Activated CD8-positive, alpha-beta T cell treated with anti-CD3 and anti-CD28 coated beads for 36 hours (primary cell): ENCODE measurements at regions of chr10 and their contacts with region 1.

Region 1: DNA sequence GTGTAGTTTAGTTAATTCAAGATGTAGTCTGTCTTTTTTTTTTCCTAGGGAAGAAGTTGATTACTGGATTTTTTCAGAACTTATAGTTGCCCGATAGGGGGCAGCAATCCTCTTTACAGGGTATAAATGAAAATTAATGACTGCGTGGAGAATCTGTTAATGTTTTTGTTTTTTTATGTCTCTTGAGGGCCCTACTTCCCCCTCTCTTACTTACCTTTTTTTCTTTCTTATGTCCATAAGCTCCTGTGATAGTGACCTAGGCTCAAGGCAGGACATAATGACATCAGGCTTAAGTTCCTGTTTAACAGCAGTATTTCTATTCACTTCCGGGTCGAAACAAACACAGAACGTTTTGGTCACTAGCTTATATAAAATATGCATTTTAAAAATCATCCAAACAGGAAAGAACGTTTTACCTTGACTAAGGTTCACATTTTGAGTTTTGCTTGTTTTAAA is 18.8 kb downstream of the CDC123 start:
- DNase-seq: peak; percentile 45
- ATAC-seq: peak; percentile 37
- H3K4me3 Mint-ChIP-seq: peak overlapping the region; percentile 20
- H3K27ac Mint-ChIP-seq: peak overlapping the region; percentile 80
- H3K4me1 Mint-ChIP-seq: peaks cover 12% of the 10 kb centered on the region
- H3K27me3 Mint-ChIP-seq: no peaks in the 10 kb centered on the region
- CTCF ChIP-seq: peak; percentile 85

Region 2: DNA sequence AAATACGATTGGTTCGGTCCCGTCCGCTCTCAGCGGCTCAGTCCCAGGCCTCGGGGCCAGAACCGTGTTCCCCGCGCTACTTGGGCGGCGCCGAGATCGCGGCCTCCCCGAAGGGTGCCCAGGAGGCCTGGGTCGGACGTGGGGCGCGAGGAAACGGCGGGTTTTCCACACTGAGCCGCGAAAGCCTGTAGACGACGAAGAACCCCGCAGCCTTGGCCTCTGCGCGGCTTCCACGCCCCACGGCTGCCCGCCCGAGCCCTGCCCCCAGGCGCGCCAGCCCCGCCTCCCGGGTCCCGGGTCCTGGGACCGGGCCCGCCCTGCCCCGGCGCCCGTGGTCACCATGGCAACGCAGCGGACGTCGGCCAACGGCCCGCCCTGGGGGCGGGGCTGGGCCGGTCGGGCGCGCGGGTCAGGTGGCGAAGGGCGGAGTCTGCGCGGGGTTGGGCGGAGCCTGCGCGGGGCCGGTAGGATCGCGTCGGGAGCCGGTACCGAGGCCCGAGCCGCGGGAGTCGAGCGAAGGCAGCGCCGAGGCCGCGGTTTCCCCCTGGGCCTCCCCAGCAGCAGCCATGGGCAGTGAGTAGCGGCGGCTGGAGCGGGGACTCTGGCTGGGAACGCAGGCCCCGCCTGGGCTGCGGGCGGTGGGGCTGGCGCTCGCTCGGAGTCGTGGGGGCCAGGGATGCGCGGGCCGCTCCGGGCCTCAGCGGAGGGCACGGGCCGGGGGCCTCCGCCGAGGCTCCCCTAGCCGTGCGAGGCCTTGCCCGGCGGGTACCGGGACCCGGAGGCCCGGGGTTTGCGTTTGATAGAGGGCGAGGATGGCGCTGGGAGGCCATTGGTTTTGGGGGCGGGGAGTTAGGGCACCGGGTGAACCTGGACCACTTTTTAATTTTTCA is 85.3 kb before region 1 on chr10 and contains the start of gene SEC61A2:
- CTCF ChIA-PET with region 1: no interaction called
- POLR2A ChIA-PET with region 1: no interaction called
- intact Hi-C with region 1: no loop called
- DNase-seq: peak; percentile 96
- ATAC-seq: peak; percentile 96
- H3K4me3 Mint-ChIP-seq: peak within 1 kb of the TSS; percentile 88
- H3K27ac Mint-ChIP-seq: peak within 1 kb of the TSS; percentile 78
- H3K4me1 Mint-ChIP-seq: peaks cover 21% of the 10 kb centered on the region
- H3K27me3 Mint-ChIP-seq: no peaks in the 10 kb centered on the region
- CTCF ChIP-seq: no peak
- total RNA-seq, gene SEC61A2: 10.8 to 12.0 TPM

Region 3: GRCh38 chr10:12195603-12196506 is 18.9 kb before region 1 on chr10 and contains the starts of genes CDC123 and NUDT5:
- CTCF ChIA-PET with region 1: interaction called, 34 read pairs
- POLR2A ChIA-PET with region 1: interaction called, 10 read pairs
- intact Hi-C with region 1: no loop called
- DNase-seq: peak; percentile 94
- ATAC-seq: peak; percentile 95
- H3K4me3 Mint-ChIP-seq: peak within 1 kb of the TSS; percentile 95
- H3K27ac Mint-ChIP-seq: peak within 1 kb of the TSS; percentile 99
- H3K4me1 Mint-ChIP-seq: peaks cover 50% of the 10 kb centered on the region
- H3K27me3 Mint-ChIP-seq: no peaks in the 10 kb centered on the region
- CTCF ChIP-seq: no peak
- total RNA-seq, gene CDC123: 123 to 125 TPM
- total RNA-seq, gene NUDT5: 95.9 to 98.6 TPM

Region 4: GRCh38 chr10:12228851-12229250 is 14.1 kb after region 1 on chr10:
- CTCF ChIA-PET with region 1: interaction called, 29 read pairs
- POLR2A ChIA-PET with region 1: interaction called, 4 read pairs
- intact Hi-C with region 1: no loop called
- DNase-seq: no peak
- ATAC-seq: no peak
- H3K4me3 Mint-ChIP-seq: no peak overlapping the region
- H3K27ac Mint-ChIP-seq: no peak overlapping the region
- H3K4me1 Mint-ChIP-seq: no peaks in the 10 kb centered on the region
- H3K27me3 Mint-ChIP-seq: no peaks in the 10 kb centered on the region
- CTCF ChIP-seq: no peak

Region 5: GRCh38 chr10:12264204-12264940 is 49.6 kb after region 1 on chr10:
- CTCF ChIA-PET with region 1: interaction called, 18 read pairs
- POLR2A ChIA-PET with region 1: no interaction called
- intact Hi-C with region 1: no loop called
- DNase-seq: peak; percentile 89
- ATAC-seq: peak; percentile 92
- H3K4me3 Mint-ChIP-seq: peak overlapping the region; percentile 30
- H3K27ac Mint-ChIP-seq: peak overlapping the region; percentile 85
- H3K4me1 Mint-ChIP-seq: peaks cover 24% of the 10 kb centered on the region
- H3K27me3 Mint-ChIP-seq: no peaks in the 10 kb centered on the region
- CTCF ChIP-seq: peak; percentile 73

Region 6: GRCh38 chr10:12656518-12657142 is 441.8 kb after region 1 on chr10:
- CTCF ChIA-PET with region 1: interaction called, 29 read pairs
- POLR2A ChIA-PET with region 1: interaction called, 3 read pairs
- intact Hi-C with region 1: no loop called
- DNase-seq: no peak
- ATAC-seq: peak; percentile 86
- H3K4me3 Mint-ChIP-seq: no peak overlapping the region
- H3K27ac Mint-ChIP-seq: no peak overlapping the region
- H3K4me1 Mint-ChIP-seq: peaks cover 23% of the 10 kb centered on the region
- H3K27me3 Mint-ChIP-seq: no peaks in the 10 kb centered on the region
- CTCF ChIP-seq: peak; percentile 86